MCF 10A (cell line): ENCODE measurements at regions of chr10 and their contacts with region 1.

Region 1: DNA sequence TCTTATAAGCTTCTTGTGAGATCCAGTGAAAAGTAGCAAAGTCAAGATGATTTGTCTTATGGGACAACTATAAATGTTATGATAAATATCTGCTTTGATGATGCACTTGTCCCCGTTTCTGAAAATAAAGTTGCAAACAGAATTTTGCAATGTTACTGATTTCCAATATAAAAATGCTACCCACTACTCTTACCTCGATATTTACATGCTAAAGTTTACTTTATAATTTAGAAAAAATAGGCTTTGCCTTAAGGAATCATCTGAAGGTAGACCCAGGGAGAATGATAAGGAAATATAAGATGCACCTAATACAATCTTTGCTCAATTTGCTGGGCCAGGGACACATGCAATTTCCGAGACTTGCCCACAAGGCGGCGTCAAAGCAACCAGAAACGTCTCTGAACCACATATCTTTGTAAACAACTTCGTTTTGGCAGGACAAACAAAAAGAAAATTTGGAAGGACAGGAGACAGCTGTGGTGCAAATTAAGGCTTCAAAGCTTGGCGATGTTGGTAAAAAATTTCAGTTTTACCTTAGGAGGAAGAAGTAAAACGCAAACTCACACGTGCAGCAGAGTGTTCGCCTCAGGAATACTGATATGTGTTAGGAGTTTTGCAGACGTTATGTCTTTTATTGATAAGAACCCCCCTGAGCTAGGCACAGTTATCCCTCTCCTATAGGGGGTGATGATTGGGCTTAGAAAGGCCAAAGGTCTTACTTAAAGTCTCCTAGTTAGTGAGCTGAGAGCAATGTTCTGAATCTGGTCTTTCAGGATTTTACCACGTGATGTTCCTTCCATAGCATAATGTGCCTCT is 134.4 kb downstream of the PRKCQ start:
- DNase-seq: peak; percentile 64
- H3K4me3 Mint-ChIP-seq: no peak overlapping the region
- H3K27ac Mint-ChIP-seq: no peak overlapping the region
- H3K4me1 Mint-ChIP-seq: no peaks in the 10 kb centered on the region
- H3K27me3 Mint-ChIP-seq: no peaks in the 10 kb centered on the region
- CTCF ChIP-seq: peak; percentile 55

Region 2: GRCh38 chr10:6269953-6270867 is 175.5 kb before region 1 on chr10:
- CTCF ChIA-PET with region 1: no interaction called
- POLR2A ChIA-PET with region 1: no interaction called
- intact Hi-C with region 1: no loop called
- DNase-seq: peak; percentile 67
- H3K4me3 Mint-ChIP-seq: no peak overlapping the region
- H3K27ac Mint-ChIP-seq: no peak overlapping the region
- H3K4me1 Mint-ChIP-seq: no peaks in the 10 kb centered on the region
- H3K27me3 Mint-ChIP-seq: no peaks in the 10 kb centered on the region
- CTCF ChIP-seq: no peak

Region 3: GRCh38 chr10:6379015-6379776 is 66.5 kb before region 1 on chr10:
- CTCF ChIA-PET with region 1: no interaction called
- POLR2A ChIA-PET with region 1: no interaction called
- intact Hi-C with region 1: no loop called
- DNase-seq: no peak
- H3K4me3 Mint-ChIP-seq: no peak overlapping the region
- H3K27ac Mint-ChIP-seq: no peak overlapping the region
- H3K4me1 Mint-ChIP-seq: no peaks in the 10 kb centered on the region
- H3K27me3 Mint-ChIP-seq: no peaks in the 10 kb centered on the region
- CTCF ChIP-seq: no peak

Region 4: GRCh38 chr10:6431861-6432260 is 13.8 kb before region 1 on chr10:
- CTCF ChIA-PET with region 1: interaction called, 11 read pairs
- POLR2A ChIA-PET with region 1: interaction called, 3 read pairs
- intact Hi-C with region 1: no loop called
- DNase-seq: no peak
- H3K4me3 Mint-ChIP-seq: no peak overlapping the region
- H3K27ac Mint-ChIP-seq: no peak overlapping the region
- H3K4me1 Mint-ChIP-seq: no peaks in the 10 kb centered on the region
- H3K27me3 Mint-ChIP-seq: peaks cover 17% of the 10 kb centered on the region
- CTCF ChIP-seq: no peak

Region 5: DNA sequence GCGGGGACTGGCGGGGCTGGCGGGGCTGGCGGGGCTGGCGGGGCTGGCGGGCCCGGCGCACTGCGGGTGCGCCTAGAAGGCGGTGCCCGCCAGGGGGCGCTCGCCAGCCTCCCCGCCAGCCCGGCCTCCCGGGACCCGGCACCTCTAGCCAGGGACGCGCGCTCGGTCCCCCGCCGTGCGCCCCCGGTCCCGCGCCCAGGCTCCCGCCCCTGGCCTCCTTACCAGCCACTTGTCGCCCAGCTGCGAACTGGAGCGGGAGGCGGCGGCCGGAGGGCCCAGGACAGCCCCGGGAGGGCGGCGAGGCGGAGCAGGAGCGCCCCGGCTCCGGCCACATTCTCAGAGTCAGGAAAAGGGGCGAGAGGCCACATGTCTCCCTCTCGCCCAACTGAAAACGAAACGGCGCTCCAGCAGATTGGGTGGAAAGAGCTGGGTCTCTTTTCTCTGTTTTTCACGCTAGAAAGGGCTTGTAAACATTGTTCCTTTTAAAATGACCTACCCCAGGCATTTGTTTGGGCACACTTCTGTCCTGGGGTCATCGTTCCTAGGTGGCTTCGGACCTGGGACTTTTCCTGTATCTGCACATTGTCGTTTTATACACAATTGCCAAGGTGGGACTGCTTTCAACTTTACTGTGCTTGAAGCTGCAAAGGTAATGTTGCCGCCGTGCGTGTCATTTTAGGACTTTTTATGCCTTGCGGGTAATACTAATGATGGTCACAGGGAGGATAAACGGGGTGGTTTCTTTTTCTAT is 134.7 kb after region 1 on chr10:
- CTCF ChIA-PET with region 1: interaction called, 3 read pairs
- POLR2A ChIA-PET with region 1: no interaction called
- intact Hi-C with region 1: loop called (anchors 1 kb)
- DNase-seq: peak; percentile 55
- H3K4me3 Mint-ChIP-seq: peak overlapping the region; percentile 81
- H3K27ac Mint-ChIP-seq: peak overlapping the region; percentile 49
- H3K4me1 Mint-ChIP-seq: no peaks in the 10 kb centered on the region
- H3K27me3 Mint-ChIP-seq: peaks cover 33% of the 10 kb centered on the region
- CTCF ChIP-seq: peak; percentile 60

Region 6: GRCh38 chr10:6647811-6648526 is 202.3 kb after region 1 on chr10:
- CTCF ChIA-PET with region 1: interaction called, 7 read pairs
- POLR2A ChIA-PET with region 1: no interaction called
- intact Hi-C with region 1: loop called (anchors 1 kb)
- DNase-seq: peak; percentile 59
- H3K4me3 Mint-ChIP-seq: no peak overlapping the region
- H3K27ac Mint-ChIP-seq: no peak overlapping the region
- H3K4me1 Mint-ChIP-seq: no peaks in the 10 kb centered on the region
- H3K27me3 Mint-ChIP-seq: peaks cover 17% of the 10 kb centered on the region
- CTCF ChIP-seq: peak; percentile 82